Ovary (tissue), 10 donors: ENCODE measurements at regions of chr3 and their contacts with region 1.

Region 1: DNA sequence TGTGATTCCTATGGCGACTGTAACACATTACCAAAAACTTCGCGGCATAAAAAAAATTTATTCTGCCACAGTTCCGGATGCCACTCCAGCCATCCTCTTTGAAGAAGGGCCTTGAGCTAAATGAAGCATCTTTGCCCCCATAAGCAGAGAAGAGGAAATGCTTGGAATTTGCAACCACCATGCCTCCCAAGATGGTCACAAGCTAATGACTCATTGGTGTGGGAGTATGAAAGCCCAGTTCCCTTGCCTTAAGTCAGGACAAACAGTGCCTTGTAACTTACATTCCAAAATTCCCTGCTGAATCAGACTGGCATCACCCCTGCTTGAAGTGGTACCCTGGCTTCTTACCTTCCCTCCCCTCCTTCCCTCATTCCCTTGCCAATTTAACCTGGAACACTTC is 1077.4 kb downstream of the EPHA3 start:
- DNase-seq: no peak
- H3K4me3 ChIP-seq: no peak overlapping the region
- H3K27ac ChIP-seq: no peak overlapping the region
- H3K4me1 ChIP-seq: peaks cover 2% of the 10 kb centered on the region
- H3K27me3 ChIP-seq: no peaks in the 10 kb centered on the region
- CTCF ChIP-seq: no peak
- EP300 ChIP-seq: no peak
- POLR2A ChIP-seq: no peak

Region 2: GRCh38 chr3:88203642-88204055 is 1981.2 kb before region 1 on chr3:
- intact Hi-C with region 1: loop called in 2 of 4 experiments (anchors 10 kb)
- DNase-seq: peak; percentile 22 to 72 (median 70)
- H3K4me3 ChIP-seq: no peak overlapping the region
- H3K27ac ChIP-seq: no peak overlapping the region
- H3K4me1 ChIP-seq: no peaks in the 10 kb centered on the region
- H3K27me3 ChIP-seq: no peaks in the 10 kb centered on the region
- CTCF ChIP-seq: peak; percentile 42 to 71 (median 56)
- EP300 ChIP-seq: no peak
- POLR2A ChIP-seq: no peak

Region 3: DNA sequence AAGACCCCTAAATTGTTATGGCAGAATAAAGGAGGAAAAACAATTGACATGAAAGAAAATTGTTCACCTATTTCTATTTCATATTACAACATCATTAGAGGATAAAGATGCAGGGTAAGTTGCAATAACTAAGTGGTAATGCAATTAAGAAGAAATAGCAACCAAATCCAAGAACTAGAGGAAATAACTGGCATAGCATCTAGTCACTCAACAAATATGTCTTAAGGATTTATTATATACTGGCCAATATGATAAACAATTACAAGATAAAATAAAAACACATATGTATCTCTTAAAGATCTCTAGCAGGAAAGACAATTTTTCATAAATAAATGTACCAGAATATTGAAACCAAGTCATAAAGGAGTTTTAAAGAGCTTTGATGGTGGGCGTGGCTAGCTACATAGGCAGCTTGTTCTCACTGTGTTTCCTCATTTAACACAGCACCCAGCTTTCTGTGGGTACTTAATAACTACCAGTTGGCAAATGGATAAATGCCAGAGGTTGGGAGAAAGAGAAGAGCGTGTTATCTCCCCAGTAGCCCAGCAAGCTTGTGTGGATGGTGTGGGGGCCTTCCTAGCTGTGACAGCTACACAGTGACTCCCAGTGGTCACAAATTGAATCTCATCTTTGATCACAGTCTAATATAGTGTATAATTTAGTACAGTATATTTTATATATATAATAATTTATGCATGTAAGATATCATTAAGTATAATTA is 93.5 kb before region 1 on chr3:
- intact Hi-C with region 1: no loop called
- DNase-seq: peak in 4 of 5 donors; percentile 18 to 51 (median 28)
- H3K4me3 ChIP-seq: no peak overlapping the region
- H3K27ac ChIP-seq: no peak overlapping the region
- H3K4me1 ChIP-seq: no peaks in the 10 kb centered on the region
- H3K27me3 ChIP-seq: no peaks in the 10 kb centered on the region
- CTCF ChIP-seq: peak in 2 of 3 donors; percentile 33 to 39
- EP300 ChIP-seq: no peak
- POLR2A ChIP-seq: no peak

Region 4: DNA sequence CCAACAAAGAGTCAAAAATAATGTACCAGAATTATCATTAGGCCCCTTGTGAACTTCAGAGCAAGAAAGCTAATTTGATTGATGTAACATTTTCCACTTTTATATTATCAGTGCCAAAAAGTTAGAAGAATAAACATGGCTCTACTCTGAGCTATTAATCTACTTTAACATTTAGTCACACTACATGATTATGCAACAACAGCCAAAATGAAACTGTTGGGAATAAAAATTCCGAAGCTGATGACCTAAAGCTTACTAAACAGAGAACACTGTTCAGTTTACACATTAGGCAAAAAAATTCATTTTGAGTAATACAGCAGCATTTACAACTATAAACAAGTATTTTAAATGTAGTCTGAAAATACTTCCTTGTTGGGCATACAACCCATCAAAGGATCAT is 56.6 kb after region 1 on chr3:
- intact Hi-C with region 1: no loop called
- DNase-seq: no peak
- H3K4me3 ChIP-seq: no peak overlapping the region
- H3K27ac ChIP-seq: no peak overlapping the region
- H3K4me1 ChIP-seq: no peaks in the 10 kb centered on the region
- H3K27me3 ChIP-seq: no peaks in the 10 kb centered on the region
- CTCF ChIP-seq: no peak
- EP300 ChIP-seq: no peak
- POLR2A ChIP-seq: no peak